ENCODE measurements at regions of chr11 and their contacts with region 1.

Region 1: DNA sequence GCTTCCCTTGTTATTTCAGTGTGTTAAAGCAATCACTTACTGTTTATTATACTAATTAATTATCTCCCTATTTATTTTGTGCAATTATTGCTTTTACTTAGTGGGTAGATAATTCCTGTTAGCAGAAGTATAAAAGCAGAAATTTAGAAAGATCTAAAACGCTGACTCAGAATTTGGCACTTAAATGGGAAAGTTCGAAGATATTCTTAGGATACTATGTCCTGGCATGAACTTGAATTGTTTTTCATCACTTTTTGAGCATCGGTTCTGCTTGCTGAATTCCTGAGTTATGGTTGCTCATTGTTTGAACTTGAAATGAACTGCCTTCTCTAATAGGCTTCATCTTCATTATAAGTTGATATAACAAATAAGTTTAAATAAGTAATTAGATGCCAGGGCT is 325.4 kb downstream of the JRKL start:
- DNase-seq: no peak
- H3K4me3 ChIP-seq: no peak overlapping the region
- H3K27ac ChIP-seq: no peak overlapping the region
- H3K4me1 ChIP-seq: no peaks in the 10 kb centered on the region
- H3K27me3 ChIP-seq: no peaks in the 10 kb centered on the region
- CTCF ChIP-seq: no peak
- POLR2A ChIP-seq: no peak

Region 2: DNA sequence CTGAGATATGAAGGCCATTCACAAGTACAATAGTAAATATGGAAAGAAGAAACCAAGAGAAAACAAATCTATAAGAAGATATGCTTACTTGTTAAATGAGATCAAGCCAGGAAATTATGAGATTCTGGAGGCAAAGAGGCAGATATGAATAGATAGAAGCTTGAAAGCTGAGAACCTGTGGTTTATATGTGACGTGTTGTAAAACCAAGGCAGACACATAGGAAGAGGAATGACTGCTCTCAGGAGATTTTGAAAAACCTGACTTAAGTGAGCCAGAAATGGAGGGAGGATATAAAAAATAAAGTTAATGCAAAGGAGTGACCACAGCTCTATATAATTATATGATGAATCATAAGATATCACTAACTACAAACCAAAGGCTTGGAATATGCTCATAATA is 1145.0 kb after region 1 on chr11:
- intact Hi-C with region 1: loop called (anchors 5 kb)
- DNase-seq: no peak
- H3K4me3 ChIP-seq: no peak overlapping the region
- H3K27ac ChIP-seq: no peak overlapping the region
- H3K4me1 ChIP-seq: no peaks in the 10 kb centered on the region
- H3K27me3 ChIP-seq: no peaks in the 10 kb centered on the region
- CTCF ChIP-seq: no peak
- POLR2A ChIP-seq: no peak